ENCODE measurements at regions of chr12 and their contacts with region 1.

Region 1: GRCh38 chr12:27969624-27970400 is 2.7 kb downstream of the PTHLH start:
- DNase-seq: peak; percentile 79
- H3K4me3 Mint-ChIP-seq: peak overlapping the region; percentile 90
- H3K27ac Mint-ChIP-seq: peak overlapping the region; percentile 76
- H3K4me1 Mint-ChIP-seq: peaks cover 47% of the 10 kb centered on the region
- H3K27me3 Mint-ChIP-seq: no peaks in the 10 kb centered on the region
- CTCF ChIP-seq: peak; percentile 35

Region 2: DNA sequence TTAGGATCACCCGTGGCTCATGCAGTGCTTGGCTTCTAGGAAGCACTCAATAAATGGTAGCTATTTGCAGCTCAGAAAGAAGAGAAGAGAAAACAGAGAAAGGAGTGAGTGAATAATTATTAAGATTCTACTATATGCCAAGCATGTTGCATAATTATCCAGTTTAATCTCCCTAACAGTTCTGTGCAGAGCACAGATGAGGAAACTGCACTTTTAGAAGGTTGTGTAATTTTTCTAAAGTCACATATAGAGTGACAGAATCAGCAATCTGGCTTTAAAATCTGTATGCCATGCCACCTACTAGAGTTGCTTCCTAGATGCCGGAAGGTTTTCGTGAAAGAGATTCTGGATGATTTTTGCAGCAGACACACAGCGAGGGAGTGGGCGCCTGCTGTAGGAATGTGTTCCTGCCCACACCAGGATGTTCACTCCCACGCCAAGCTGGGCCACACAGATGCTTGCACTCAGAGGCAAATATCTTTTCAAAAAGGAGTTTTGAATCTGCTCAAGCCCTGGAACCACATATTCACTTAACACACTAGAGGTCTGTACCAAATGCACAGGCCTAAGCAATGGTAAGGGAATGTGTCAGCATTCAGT is 573.5 kb before region 1 on chr12:
- CTCF ChIA-PET with region 1: no interaction called
- POLR2A ChIA-PET with region 1: no interaction called
- intact Hi-C with region 1: no loop called
- DNase-seq: no peak
- H3K4me3 Mint-ChIP-seq: no peak overlapping the region
- H3K27ac Mint-ChIP-seq: no peak overlapping the region
- H3K4me1 Mint-ChIP-seq: peaks cover 6% of the 10 kb centered on the region
- H3K27me3 Mint-ChIP-seq: no peaks in the 10 kb centered on the region
- CTCF ChIP-seq: no peak

Region 3: GRCh38 chr12:27958675-27959074 is 11.1 kb before region 1 on chr12:
- CTCF ChIA-PET with region 1: interaction called, 11 read pairs
- POLR2A ChIA-PET with region 1: no interaction called
- intact Hi-C with region 1: no loop called
- DNase-seq: no peak
- H3K4me3 Mint-ChIP-seq: no peak overlapping the region
- H3K27ac Mint-ChIP-seq: no peak overlapping the region
- H3K4me1 Mint-ChIP-seq: no peaks in the 10 kb centered on the region
- H3K27me3 Mint-ChIP-seq: no peaks in the 10 kb centered on the region
- CTCF ChIP-seq: no peak

Region 4: GRCh38 chr12:28023156-28023887 is 53.5 kb after region 1 on chr12:
- CTCF ChIA-PET with region 1: interaction called, 4 read pairs
- POLR2A ChIA-PET with region 1: no interaction called
- intact Hi-C with region 1: loop called (anchors 5 kb)
- DNase-seq: peak; percentile 93
- H3K4me3 Mint-ChIP-seq: no peak overlapping the region
- H3K27ac Mint-ChIP-seq: peak overlapping the region; percentile 91
- H3K4me1 Mint-ChIP-seq: peaks cover 26% of the 10 kb centered on the region
- H3K27me3 Mint-ChIP-seq: no peaks in the 10 kb centered on the region
- CTCF ChIP-seq: no peak

Region 5: GRCh38 chr12:28065889-28066630 is 96.2 kb after region 1 on chr12:
- CTCF ChIA-PET with region 1: no interaction called
- POLR2A ChIA-PET with region 1: no interaction called
- intact Hi-C with region 1: no loop called
- DNase-seq: no peak
- H3K4me3 Mint-ChIP-seq: no peak overlapping the region
- H3K27ac Mint-ChIP-seq: no peak overlapping the region
- H3K4me1 Mint-ChIP-seq: peaks cover 8% of the 10 kb centered on the region
- H3K27me3 Mint-ChIP-seq: no peaks in the 10 kb centered on the region
- CTCF ChIP-seq: no peak

Region 6: GRCh38 chr12:28099871-28100270 is 130.1 kb after region 1 on chr12:
- CTCF ChIA-PET with region 1: no interaction called
- POLR2A ChIA-PET with region 1: no interaction called
- intact Hi-C with region 1: no loop called
- DNase-seq: no peak
- H3K4me3 Mint-ChIP-seq: no peak overlapping the region
- H3K27ac Mint-ChIP-seq: no peak overlapping the region
- H3K4me1 Mint-ChIP-seq: no peaks in the 10 kb centered on the region
- H3K27me3 Mint-ChIP-seq: no peaks in the 10 kb centered on the region
- CTCF ChIP-seq: no peak

Region 7: GRCh38 chr12:28172434-28173030 is 202.7 kb after region 1 on chr12:
- CTCF ChIA-PET with region 1: interaction called, 28 read pairs
- POLR2A ChIA-PET with region 1: interaction called, 16 read pairs
- intact Hi-C with region 1: loop called (anchors 1 kb)
- DNase-seq: peak; percentile 78
- H3K4me3 Mint-ChIP-seq: no peak overlapping the region
- H3K27ac Mint-ChIP-seq: no peak overlapping the region
- H3K4me1 Mint-ChIP-seq: peaks cover 10% of the 10 kb centered on the region
- H3K27me3 Mint-ChIP-seq: no peaks in the 10 kb centered on the region
- CTCF ChIP-seq: peak; percentile 63

Region 8: DNA sequence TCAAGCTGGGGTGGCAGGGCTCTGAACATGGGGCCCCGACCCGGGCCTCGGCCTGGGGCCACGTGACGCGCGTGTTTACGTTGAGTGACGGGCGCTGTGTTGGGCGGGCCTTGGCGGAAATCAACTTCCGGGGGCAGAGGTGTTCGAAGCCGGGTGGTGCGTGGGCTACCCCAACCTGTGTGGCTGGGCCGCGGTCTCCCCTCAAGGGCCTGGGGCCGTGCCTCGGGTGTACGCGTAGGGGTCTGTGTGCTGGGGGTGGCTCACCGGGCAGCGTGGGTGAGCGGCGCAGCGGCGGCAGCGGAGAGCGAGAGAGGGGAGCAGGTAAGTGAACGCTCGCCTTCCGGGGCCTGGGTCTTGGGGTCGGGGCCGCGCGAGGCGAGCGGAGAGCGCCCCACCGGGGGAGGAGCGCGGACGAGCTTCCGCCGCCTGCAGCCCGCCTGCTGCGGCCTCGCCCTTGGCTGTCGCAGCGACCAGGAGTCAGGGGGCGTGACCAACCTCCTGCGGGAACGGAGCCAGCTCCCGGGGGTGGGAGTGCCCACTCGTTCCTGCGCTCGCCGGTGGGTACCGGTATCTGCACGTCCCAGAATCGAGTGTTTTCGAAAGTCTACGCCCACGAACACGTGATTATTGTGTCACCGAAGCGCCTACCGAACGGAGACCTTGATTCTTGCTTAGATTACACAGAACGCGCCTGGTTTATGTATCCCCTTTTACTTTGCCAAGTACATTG is 220.7 kb after region 1 on chr12 and contains the start of gene CCDC91:
- CTCF ChIA-PET with region 1: interaction called, 3 read pairs
- POLR2A ChIA-PET with region 1: interaction called, 15 read pairs
- intact Hi-C with region 1: no loop called
- DNase-seq: peak; percentile 84
- H3K4me3 Mint-ChIP-seq: peak within 1 kb of the TSS; percentile 94
- H3K27ac Mint-ChIP-seq: peak within 1 kb of the TSS; percentile 98
- H3K4me1 Mint-ChIP-seq: peaks cover 15% of the 10 kb centered on the region
- H3K27me3 Mint-ChIP-seq: no peaks in the 10 kb centered on the region
- CTCF ChIP-seq: no peak
- total RNA-seq, gene CCDC91: 35.9 and 38.6 TPM in 2 replicates

Region 9: GRCh38 chr12:28497889-28498411 is 528.1 kb after region 1 on chr12:
- CTCF ChIA-PET with region 1: no interaction called
- POLR2A ChIA-PET with region 1: no interaction called
- intact Hi-C with region 1: no loop called
- DNase-seq: peak; percentile 11
- H3K4me3 Mint-ChIP-seq: no peak overlapping the region
- H3K27ac Mint-ChIP-seq: peak overlapping the region; percentile 57
- H3K4me1 Mint-ChIP-seq: peaks cover 17% of the 10 kb centered on the region
- H3K27me3 Mint-ChIP-seq: no peaks in the 10 kb centered on the region
- CTCF ChIP-seq: no peak

Region 10: GRCh38 chr12:28872654-28873268 is 902.9 kb after region 1 on chr12:
- CTCF ChIA-PET with region 1: interaction called, 10 read pairs
- POLR2A ChIA-PET with region 1: no interaction called
- intact Hi-C with region 1: loop called (anchors 1 kb)
- DNase-seq: peak; percentile 69
- H3K4me3 Mint-ChIP-seq: no peak overlapping the region
- H3K27ac Mint-ChIP-seq: no peak overlapping the region
- H3K4me1 Mint-ChIP-seq: peaks cover 21% of the 10 kb centered on the region
- H3K27me3 Mint-ChIP-seq: no peaks in the 10 kb centered on the region
- CTCF ChIP-seq: peak; percentile 77

Region 11: GRCh38 chr12:28963554-28963953 is 993.7 kb after region 1 on chr12:
- CTCF ChIA-PET with region 1: no interaction called
- POLR2A ChIA-PET with region 1: no interaction called
- intact Hi-C with region 1: loop called (anchors 1 kb)
- DNase-seq: peak; percentile 49
- H3K4me3 Mint-ChIP-seq: no peak overlapping the region
- H3K27ac Mint-ChIP-seq: no peak overlapping the region
- H3K4me1 Mint-ChIP-seq: peaks cover 20% of the 10 kb centered on the region
- H3K27me3 Mint-ChIP-seq: no peaks in the 10 kb centered on the region
- CTCF ChIP-seq: peak; percentile 48